Ovary (tissue), 10 donors: ENCODE measurements at regions of chr3 and their contacts with region 1.

Region 1: GRCh38 chr3:47420511-47421484 is 40.0 kb downstream of the PTPN23 start:
- DNase-seq: peak; percentile 77 to 92 (median 89)
- H3K4me3 ChIP-seq: no peak overlapping the region
- H3K27ac ChIP-seq: peak overlapping the region in 1 of 2 donors; percentile 63
- H3K4me1 ChIP-seq: peaks cover 11% of the 10 kb centered on the region
- H3K27me3 ChIP-seq: no peaks in the 10 kb centered on the region
- CTCF ChIP-seq: peak; percentile 71 to 92 (median 91)
- EP300 ChIP-seq: no peak
- POLR2A ChIP-seq: peak; percentile 8

Region 2: DNA sequence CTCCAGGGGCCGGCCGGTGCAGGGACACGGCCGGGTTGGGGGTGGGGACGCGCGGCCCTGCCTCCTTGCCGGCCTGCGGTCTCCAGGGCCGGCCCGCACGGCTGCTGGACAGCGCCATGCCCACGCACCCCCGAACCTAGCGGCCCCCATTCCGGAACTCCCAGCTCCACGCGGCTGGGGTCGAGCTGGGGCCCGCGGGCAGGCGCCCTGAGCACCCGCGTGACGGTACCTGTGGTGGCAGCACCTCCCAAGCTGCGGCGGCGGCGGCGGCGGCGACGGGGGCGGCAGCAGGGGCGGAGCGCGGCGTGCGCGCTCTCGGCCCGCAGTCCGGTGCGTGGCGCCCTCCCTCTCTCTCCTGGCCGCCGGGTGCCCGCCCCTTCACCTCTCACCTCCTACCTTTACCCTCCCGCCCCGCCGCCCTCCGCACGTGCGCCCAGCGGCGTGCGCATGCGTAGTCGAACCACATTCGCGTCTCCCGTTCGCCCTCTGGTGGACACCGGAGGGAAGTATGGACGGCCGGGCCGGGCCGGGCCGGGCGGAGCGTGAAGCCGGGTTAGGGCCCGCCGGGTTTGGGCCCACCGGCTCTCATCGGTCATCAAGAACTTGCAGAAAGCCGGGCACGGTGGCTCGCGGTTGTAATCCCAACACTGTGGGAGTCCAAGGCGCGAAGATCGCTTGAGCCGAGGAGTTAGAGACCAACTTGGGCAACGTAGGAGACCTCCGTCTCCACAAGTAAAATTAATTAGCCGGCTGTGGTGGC is 55.0 kb after region 1 on chr3 and contains the start of gene SCAP:
- intact Hi-C with region 1: loop called (anchors 2 to 10 kb)
- DNase-seq: peak; percentile 92 to 97 (median 95)
- H3K4me3 ChIP-seq: peak within 1 kb of the TSS; percentile 66
- H3K27ac ChIP-seq: peak within 1 kb of the TSS in 1 of 2 donors; percentile 70
- H3K4me1 ChIP-seq: peaks cover 12% of the 10 kb centered on the region
- H3K27me3 ChIP-seq: no peaks in the 10 kb centered on the region
- CTCF ChIP-seq: peak; percentile 88 to 99 (median 99)
- EP300 ChIP-seq: no peak
- POLR2A ChIP-seq: peak; percentile 41
- total RNA-seq, gene SCAP: 53.7 to 104 (median 80.9) TPM

Region 3: GRCh38 chr3:47781685-47782445 is 361.1 kb after region 1 on chr3 and contains the start of gene SMARCC1:
- intact Hi-C with region 1: loop called in 1 of 4 experiments (anchors 5 kb)
- DNase-seq: peak; percentile 96 to 99 (median 98)
- H3K4me3 ChIP-seq: peak within 1 kb of the TSS; percentile 96
- H3K27ac ChIP-seq: peak within 1 kb of the TSS; percentile 71 to 91
- H3K4me1 ChIP-seq: peaks cover 6% of the 10 kb centered on the region
- H3K27me3 ChIP-seq: no peaks in the 10 kb centered on the region
- CTCF ChIP-seq: peak in 1 of 3 donors; percentile 17
- EP300 ChIP-seq: peak; percentile 73
- POLR2A ChIP-seq: peak; percentile 80
- total RNA-seq, gene SMARCC1: 26.1 to 68.9 (median 64.5) TPM